PC-3 (cell line): ENCODE measurements at regions of chr1 and their contacts with region 1.

Region 1: GRCh38 chr1:184691719-184692324 is 62.8 kb downstream of the EDEM3 start:
- DNase-seq: peak; percentile 53
- ATAC-seq: no peak; the same call in 1 of the 2 replicates
- H3K4me3 ChIP-seq: no peak overlapping the region
- H3K27ac ChIP-seq: no peak overlapping the region
- H3K4me1 ChIP-seq: no peaks in the 10 kb centered on the region
- H3K27me3 ChIP-seq: no peaks in the 10 kb centered on the region
- CTCF ChIP-seq: peak; percentile 74

Region 2: GRCh38 chr1:184075055-184076029 is 616.5 kb before region 1 on chr1:
- CTCF ChIA-PET with region 1: no interaction called
- POLR2A ChIA-PET with region 1: no interaction called
- intact Hi-C with region 1: loop called (anchors 10 kb)
- DNase-seq: peak; percentile 70
- ATAC-seq: peak; percentile 67
- H3K4me3 ChIP-seq: no peak overlapping the region
- H3K27ac ChIP-seq: no peak overlapping the region
- H3K4me1 ChIP-seq: no peaks in the 10 kb centered on the region
- H3K27me3 ChIP-seq: no peaks in the 10 kb centered on the region
- CTCF ChIP-seq: peak; percentile 70

Region 3: DNA sequence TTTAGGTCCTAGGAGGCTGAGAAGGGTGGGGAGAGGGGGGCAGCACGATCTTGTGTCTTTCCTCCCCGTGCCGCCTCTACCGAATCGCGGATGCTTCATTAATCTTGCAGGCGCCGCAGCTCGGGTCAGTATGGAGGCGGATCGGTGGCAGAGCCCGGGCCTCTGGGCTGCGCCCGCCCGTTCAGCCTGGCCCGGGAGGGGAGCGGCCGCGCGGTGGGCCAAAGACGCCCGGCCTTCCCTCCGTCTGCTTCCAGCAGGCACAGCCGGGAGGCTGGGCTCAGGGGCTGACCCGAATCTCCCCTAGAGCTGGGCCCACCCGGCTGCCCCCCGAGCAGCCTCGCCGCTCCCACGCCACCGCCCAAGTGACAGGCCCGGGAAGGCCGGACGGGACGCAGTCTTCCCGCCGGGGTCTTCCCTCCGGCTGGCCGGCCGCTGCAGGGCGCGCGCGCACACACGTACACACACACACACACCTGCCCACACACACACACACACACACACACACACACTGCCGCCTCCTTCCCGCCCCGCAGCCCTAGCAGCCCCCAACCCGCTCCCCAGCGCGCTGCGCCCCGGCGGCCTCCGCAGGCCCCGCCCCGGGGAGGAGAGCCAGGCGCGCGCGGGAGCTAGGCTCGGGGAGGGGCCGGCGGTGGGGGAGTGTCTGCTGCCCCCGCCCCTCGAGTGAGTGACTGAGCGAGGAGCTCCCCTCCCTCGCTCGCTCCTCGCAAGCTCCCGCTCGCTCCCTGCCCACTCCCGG is 305.3 kb before region 1 on chr1 and contains the start of gene C1orf21:
- CTCF ChIA-PET with region 1: no interaction called
- POLR2A ChIA-PET with region 1: no interaction called
- intact Hi-C with region 1: loop called (anchors 10 kb)
- DNase-seq: peak; percentile 73
- ATAC-seq: peak; percentile 78
- H3K4me3 ChIP-seq: peak within 1 kb of the TSS; percentile 90
- H3K27ac ChIP-seq: no peak within 1 kb of the TSS
- H3K4me1 ChIP-seq: peaks cover 10% of the 10 kb centered on the region; the same call in 1 of the 2 replicates
- H3K27me3 ChIP-seq: no peaks in the 10 kb centered on the region
- CTCF ChIP-seq: no peak
- total RNA-seq, gene C1orf21: 1.3 and 7.3 TPM in 2 replicates

Region 4: GRCh38 chr1:184649451-184649888 is 42.4 kb before region 1 on chr1:
- CTCF ChIA-PET with region 1: no interaction called
- POLR2A ChIA-PET with region 1: no interaction called
- intact Hi-C with region 1: no loop called
- DNase-seq: no peak
- ATAC-seq: no peak
- H3K4me3 ChIP-seq: no peak overlapping the region
- H3K27ac ChIP-seq: no peak overlapping the region
- H3K4me1 ChIP-seq: no peaks in the 10 kb centered on the region
- H3K27me3 ChIP-seq: no peaks in the 10 kb centered on the region
- CTCF ChIP-seq: no peak